Activated CD4-positive, alpha-beta memory T cell treated with anti-CD3 and anti-CD28 coated beads for 36 hours (primary cell): ENCODE measurements at regions of chr1 and their contacts with region 1.

Region 1: DNA sequence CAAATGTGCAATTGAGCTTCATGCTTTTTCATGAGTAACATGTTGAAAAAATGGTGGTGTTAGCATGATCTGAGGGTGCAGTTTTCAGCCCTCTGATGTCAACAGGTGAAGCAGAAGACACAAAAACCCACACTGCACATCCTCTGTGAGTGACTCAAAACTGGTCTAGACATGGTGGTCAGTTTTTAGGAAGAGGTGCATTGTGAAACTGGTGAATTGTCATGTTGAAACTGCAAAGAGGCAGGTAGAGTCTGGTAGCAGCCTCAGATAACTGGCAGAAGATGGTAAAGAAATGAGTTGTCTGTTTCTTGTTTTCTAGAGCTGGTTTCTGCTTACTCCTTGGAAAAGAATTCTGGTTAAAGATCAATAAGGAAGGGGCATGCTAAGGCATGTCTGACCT is 97.3 kb upstream of the HMCN1 start:
- DNase-seq: peak; percentile 62
- H3K4me3 Mint-ChIP-seq: no peak overlapping the region
- H3K27ac Mint-ChIP-seq: peak overlapping the region; percentile 83
- H3K4me1 Mint-ChIP-seq: peaks cover 15% of the 10 kb centered on the region
- H3K27me3 Mint-ChIP-seq: peaks cover 3% of the 10 kb centered on the region

Region 2: DNA sequence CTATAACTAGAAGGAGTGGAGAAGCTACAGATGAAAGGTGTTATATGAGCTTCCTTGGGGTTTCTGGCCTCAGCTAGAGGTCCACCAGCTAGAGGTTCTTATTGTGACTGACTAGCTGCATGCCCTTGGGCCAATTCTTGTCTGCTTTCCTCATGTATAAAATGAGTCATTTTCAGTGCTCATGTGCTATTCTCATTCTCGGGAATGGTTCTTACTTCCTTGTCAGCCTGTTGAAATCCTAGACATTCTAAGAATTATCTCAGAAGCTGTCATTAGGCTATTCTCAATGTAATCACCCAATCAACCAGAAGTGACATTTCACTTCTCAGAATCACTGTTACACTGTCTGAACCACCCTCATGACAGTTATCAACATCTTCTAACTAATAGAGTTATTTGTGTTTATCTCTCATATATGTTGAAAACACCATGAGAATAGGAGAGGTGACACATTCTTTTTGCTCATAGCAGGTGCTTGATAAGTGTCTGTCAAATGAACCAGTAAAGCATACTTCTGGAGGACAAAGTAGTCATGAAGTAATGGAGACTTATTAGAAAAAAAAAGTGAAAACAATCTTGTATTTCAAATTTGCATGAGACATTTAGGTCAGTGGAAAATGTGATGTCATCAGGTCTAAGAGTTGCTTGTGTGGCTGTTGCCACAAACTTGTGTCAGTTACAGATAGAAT is 197.0 kb before region 1 on chr1:
- CTCF ChIA-PET with region 1: no interaction called
- POLR2A ChIA-PET with region 1: no interaction called
- intact Hi-C with region 1: loop called (anchors 1 kb)
- DNase-seq: peak; percentile 49
- H3K4me3 Mint-ChIP-seq: no peak overlapping the region
- H3K27ac Mint-ChIP-seq: no peak overlapping the region
- H3K4me1 Mint-ChIP-seq: peaks cover 8% of the 10 kb centered on the region
- H3K27me3 Mint-ChIP-seq: no peaks in the 10 kb centered on the region

Region 3: DNA sequence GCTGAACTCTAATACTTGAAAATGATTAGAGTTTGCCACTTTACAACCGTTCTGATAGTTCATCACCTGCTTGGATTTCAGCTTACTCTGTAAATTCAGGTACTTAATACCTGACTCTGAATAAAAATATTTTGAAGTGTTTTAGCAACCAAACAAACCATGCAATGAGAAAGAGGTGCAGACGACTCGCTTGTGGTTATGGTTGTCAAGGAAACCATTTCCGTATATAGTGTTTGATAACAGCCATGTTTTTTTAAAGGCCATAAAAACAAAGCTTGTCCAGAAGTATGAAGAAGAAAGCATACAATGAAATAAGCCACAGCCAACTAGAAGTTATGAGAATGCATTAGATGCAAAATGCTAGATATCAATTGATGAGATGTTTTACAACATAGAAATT is 69.9 kb before region 1 on chr1:
- CTCF ChIA-PET with region 1: interaction called, 6 read pairs
- POLR2A ChIA-PET with region 1: interaction called, 4 read pairs
- intact Hi-C with region 1: loop called (anchors 1 kb)
- DNase-seq: peak; percentile 57
- H3K4me3 Mint-ChIP-seq: no peak overlapping the region
- H3K27ac Mint-ChIP-seq: peak overlapping the region; percentile 74
- H3K4me1 Mint-ChIP-seq: peaks cover 62% of the 10 kb centered on the region
- H3K27me3 Mint-ChIP-seq: no peaks in the 10 kb centered on the region

Region 4: GRCh38 chr1:185663332-185663731 is 26.5 kb after region 1 on chr1:
- CTCF ChIA-PET with region 1: interaction called, 3 read pairs
- POLR2A ChIA-PET with region 1: no interaction called
- intact Hi-C with region 1: loop called (anchors 2 kb)
- DNase-seq: no peak
- H3K4me3 Mint-ChIP-seq: no peak overlapping the region
- H3K27ac Mint-ChIP-seq: no peak overlapping the region
- H3K4me1 Mint-ChIP-seq: peaks cover 6% of the 10 kb centered on the region
- H3K27me3 Mint-ChIP-seq: no peaks in the 10 kb centered on the region

Region 5: DNA sequence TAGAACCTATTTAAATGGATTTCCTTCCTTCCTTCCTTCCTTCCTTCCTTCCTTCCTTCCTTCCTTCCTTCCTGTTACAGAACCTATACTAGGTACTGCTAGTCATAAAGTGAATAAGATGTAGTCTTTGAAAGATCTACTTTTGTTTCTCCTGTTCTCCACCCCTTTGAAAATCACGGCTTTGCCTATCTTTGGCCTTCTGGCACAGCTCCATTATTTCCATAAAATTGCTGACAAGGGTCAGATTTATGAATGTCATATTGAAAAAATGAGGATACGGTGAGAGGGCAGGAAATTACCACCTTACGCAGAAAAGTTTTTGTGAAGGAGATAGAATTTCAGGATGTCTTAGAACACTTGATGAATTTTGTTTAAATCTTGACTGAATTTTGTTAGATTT is 79.2 kb after region 1 on chr1:
- CTCF ChIA-PET with region 1: no interaction called
- POLR2A ChIA-PET with region 1: no interaction called
- intact Hi-C with region 1: no loop called
- DNase-seq: no peak
- H3K4me3 Mint-ChIP-seq: no peak overlapping the region
- H3K27ac Mint-ChIP-seq: no peak overlapping the region
- H3K4me1 Mint-ChIP-seq: no peaks in the 10 kb centered on the region
- H3K27me3 Mint-ChIP-seq: peaks cover 5% of the 10 kb centered on the region

Region 6: GRCh38 chr1:186165303-186165702 is 528.5 kb after region 1 on chr1:
- CTCF ChIA-PET with region 1: no interaction called
- POLR2A ChIA-PET with region 1: no interaction called
- intact Hi-C with region 1: no loop called
- DNase-seq: no peak
- H3K4me3 Mint-ChIP-seq: no peak overlapping the region
- H3K27ac Mint-ChIP-seq: no peak overlapping the region
- H3K4me1 Mint-ChIP-seq: no peaks in the 10 kb centered on the region
- H3K27me3 Mint-ChIP-seq: peaks cover 9% of the 10 kb centered on the region